Activated CD4-positive, alpha-beta memory T cell treated with anti-CD3 and anti-CD28 coated beads for 36 hours (primary cell): ENCODE measurements at regions of chr17 and their contacts with region 1.

Region 1: GRCh38 chr17:76397687-76398487 is 13.5 kb downstream of the SPHK1 start:
- DNase-seq: peak; percentile 90
- H3K4me3 Mint-ChIP-seq: no peak overlapping the region
- H3K27ac Mint-ChIP-seq: no peak overlapping the region
- H3K4me1 Mint-ChIP-seq: no peaks in the 10 kb centered on the region
- H3K27me3 Mint-ChIP-seq: no peaks in the 10 kb centered on the region

Region 2: GRCh38 chr17:76307299-76307965 is 90.5 kb before region 1 on chr17:
- CTCF ChIA-PET with region 1: interaction called, 152 read pairs
- POLR2A ChIA-PET with region 1: no interaction called
- intact Hi-C with region 1: loop called (anchors 1 kb)
- DNase-seq: no peak
- H3K4me3 Mint-ChIP-seq: no peak overlapping the region
- H3K27ac Mint-ChIP-seq: no peak overlapping the region
- H3K4me1 Mint-ChIP-seq: no peaks in the 10 kb centered on the region
- H3K27me3 Mint-ChIP-seq: no peaks in the 10 kb centered on the region

Region 3: DNA sequence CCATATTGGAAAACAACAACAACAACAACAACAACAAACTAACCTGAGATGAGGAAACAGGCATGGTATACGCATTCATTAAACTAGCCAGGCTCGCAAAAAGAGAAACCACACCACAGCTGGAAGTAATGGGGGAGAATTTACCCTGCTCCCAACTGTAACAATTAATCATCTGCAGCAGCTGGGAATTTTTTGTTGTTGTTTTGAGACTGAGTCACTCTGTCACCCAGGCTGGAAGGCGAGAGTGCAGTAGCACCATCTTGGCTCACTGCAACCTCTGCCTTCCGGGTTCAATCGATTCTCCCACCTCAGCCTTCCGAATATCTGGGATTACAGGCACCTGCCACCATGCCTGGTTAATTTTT is 60.5 kb before region 1 on chr17:
- CTCF ChIA-PET with region 1: interaction called, 14 read pairs
- POLR2A ChIA-PET with region 1: no interaction called
- intact Hi-C with region 1: no loop called
- DNase-seq: no peak
- H3K4me3 Mint-ChIP-seq: no peak overlapping the region
- H3K27ac Mint-ChIP-seq: no peak overlapping the region
- H3K4me1 Mint-ChIP-seq: peaks cover 3% of the 10 kb centered on the region
- H3K27me3 Mint-ChIP-seq: no peaks in the 10 kb centered on the region

Region 4: DNA sequence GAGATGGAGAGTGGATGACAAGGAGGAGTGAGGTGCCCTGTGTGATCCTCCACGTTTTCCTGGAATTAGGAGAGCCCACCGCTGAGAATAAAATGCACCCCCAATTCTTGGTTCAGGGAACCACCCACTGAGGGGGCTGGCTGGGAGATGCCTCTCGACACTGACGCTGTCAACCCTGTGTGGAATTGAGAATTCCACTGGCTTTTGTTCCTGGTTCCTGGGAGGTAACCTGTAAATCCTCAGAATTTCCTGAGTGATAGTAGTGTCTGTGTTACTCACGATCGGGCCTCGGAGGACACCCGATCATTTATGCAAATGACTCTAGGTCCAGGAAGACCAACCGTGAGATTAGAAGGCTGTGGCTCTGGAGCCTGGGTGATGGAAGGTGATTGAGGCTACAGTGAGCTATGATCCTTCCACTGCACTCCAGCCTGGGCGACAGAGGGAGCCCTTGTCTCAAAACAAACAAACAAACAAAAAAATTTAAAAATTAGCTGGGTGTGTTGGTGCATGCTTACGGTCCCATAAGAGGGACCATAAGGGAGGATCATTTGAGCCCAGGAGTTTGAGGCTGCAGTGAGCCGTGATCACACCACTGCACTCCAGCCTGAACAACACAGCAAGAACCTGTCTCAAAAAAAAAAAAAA is 32.5 kb before region 1 on chr17:
- CTCF ChIA-PET with region 1: interaction called, 18 read pairs
- POLR2A ChIA-PET with region 1: no interaction called
- intact Hi-C with region 1: no loop called
- DNase-seq: no peak
- H3K4me3 Mint-ChIP-seq: no peak overlapping the region
- H3K27ac Mint-ChIP-seq: no peak overlapping the region
- H3K4me1 Mint-ChIP-seq: no peaks in the 10 kb centered on the region
- H3K27me3 Mint-ChIP-seq: no peaks in the 10 kb centered on the region

Region 5: DNA sequence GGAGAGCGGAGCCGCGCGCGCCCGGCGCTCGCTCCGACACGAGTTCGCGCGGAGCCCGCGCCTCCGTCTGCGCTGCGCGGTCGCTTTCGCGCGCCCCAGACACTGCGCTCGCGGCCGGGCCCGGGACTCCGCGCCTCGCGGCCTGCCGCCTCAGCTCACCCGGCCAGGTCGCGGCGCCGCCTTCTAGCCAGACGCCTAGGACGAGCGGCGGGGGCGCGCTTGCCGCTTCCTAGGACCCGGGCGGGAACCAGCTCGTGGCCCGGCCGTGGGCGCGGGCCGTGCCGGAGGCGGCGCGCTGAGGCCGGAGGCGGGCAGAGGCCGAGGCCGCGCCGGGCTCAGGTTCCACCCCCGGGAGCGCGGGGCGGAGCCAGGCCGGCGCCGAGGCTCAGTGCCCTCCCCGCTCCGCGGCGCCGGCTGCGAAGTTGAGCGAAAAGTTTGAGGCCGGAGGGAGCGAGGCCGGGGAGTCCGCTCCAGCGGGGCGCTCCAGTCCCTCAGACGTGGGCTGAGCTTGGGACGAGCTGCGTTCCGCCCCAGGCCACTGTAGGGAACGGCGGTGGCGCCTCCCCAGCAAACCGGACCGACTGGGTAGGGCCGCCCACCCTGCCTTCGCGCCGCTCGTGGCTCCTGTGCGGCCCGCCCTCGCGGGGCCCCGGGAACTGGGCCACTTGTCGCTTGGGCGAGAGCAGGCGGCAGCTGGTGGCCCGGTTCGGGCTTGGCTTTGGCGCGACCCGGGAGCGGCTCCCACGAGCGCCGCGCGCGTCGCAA is 13.5 kb before region 1 on chr17 and contains the start of gene SPHK1:
- CTCF ChIA-PET with region 1: interaction called, 109 read pairs
- POLR2A ChIA-PET with region 1: interaction called, 3 read pairs
- intact Hi-C with region 1: no loop called
- DNase-seq: peak; percentile 77
- H3K4me3 Mint-ChIP-seq: peak within 1 kb of the TSS; percentile 78
- H3K27ac Mint-ChIP-seq: peak within 1 kb of the TSS; percentile 85
- H3K4me1 Mint-ChIP-seq: peaks cover 8% of the 10 kb centered on the region
- H3K27me3 Mint-ChIP-seq: no peaks in the 10 kb centered on the region
- total RNA-seq, gene SPHK1: 9.9 to 11.4 TPM

Region 6: DNA sequence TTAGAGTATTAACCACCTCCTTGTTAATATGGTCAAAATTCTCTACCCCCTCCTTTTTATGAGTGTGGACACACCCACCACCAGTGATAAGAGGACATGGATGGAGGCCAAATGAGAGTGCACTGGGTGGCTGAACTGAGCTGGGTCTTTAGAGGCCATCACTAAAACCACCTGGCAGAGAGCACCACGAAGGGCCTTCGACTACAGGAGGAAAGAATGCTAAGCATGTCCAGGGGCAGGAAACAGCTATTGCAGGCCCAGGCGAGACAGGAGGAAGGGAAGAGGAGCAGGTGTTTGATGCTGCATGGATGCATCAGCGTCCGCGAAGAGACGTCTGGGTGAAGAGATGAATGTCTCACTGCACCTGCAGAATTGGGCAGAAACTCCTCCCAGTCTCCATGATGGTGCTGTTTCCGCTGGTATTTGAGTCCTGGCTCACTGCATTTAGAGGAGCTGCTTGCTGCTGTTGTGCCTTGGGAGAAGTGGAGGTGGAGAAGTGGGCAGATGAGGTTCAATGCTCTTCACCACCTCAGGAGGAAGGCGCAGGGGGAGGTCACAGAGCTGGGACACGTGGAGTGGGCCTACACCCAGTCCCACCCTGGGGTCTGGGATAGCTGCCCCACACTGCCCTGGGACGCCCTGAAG is 19.7 kb after region 1 on chr17:
- CTCF ChIA-PET with region 1: interaction called, 20 read pairs
- POLR2A ChIA-PET with region 1: no interaction called
- intact Hi-C with region 1: no loop called
- DNase-seq: no peak
- H3K4me3 Mint-ChIP-seq: no peak overlapping the region
- H3K27ac Mint-ChIP-seq: no peak overlapping the region
- H3K4me1 Mint-ChIP-seq: peaks cover 19% of the 10 kb centered on the region
- H3K27me3 Mint-ChIP-seq: no peaks in the 10 kb centered on the region

Region 7: GRCh38 chr17:76452660-76453430 is 55.0 kb after region 1 on chr17 and contains the start of gene UBE2O:
- CTCF ChIA-PET with region 1: interaction called, 16 read pairs
- POLR2A ChIA-PET with region 1: no interaction called
- intact Hi-C with region 1: no loop called
- DNase-seq: peak; percentile 94
- H3K4me3 Mint-ChIP-seq: peak within 1 kb of the TSS; percentile 83
- H3K27ac Mint-ChIP-seq: no peak within 1 kb of the TSS
- H3K4me1 Mint-ChIP-seq: peaks cover 33% of the 10 kb centered on the region
- H3K27me3 Mint-ChIP-seq: no peaks in the 10 kb centered on the region
- total RNA-seq, gene UBE2O: 24.5 to 25.2 TPM

Region 8: DNA sequence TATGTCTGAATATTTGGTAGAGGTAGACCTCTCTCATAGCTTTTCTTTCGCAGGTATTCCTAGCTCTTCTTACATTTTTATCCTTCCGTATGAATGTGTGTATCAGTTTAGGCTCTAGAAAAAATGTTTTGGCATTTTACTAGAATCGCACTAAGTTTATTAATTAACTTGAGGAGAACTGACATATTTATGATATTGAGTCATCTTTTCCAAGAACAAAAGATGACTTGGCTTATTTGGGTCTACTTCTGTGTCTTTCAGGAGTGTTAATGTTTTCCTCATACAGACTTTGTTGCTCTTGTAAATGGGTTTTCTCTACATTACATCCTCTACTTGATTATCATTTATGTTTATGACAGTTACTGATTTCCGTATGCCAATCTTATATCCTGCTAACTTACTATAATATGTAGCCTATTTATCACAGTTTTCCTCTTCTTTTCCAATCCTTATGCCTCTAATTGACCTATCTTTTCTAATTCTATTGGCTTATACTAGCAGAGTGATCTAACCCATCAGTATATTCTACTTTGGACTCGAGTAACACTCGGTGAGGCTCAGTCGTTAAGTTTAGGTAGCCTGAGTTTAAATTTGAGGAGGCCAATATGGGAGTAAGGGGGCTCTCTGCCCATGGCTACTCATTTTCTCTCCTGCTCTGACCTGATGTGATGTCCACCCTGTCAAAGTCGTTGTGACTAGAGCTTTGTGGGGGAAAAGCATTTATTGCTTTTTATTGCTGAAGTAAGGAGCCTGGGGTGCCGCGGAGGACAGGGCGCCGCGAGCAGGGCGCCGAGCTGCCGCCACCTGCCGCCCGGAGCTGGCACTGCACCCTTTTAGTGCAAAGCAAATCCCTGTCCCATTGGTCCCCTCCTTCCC is 225.6 kb after region 1 on chr17:
- CTCF ChIA-PET with region 1: no interaction called
- POLR2A ChIA-PET with region 1: no interaction called
- intact Hi-C with region 1: no loop called
- DNase-seq: peak; percentile 85
- H3K4me3 Mint-ChIP-seq: no peak overlapping the region
- H3K27ac Mint-ChIP-seq: no peak overlapping the region
- H3K4me1 Mint-ChIP-seq: peaks cover 5% of the 10 kb centered on the region
- H3K27me3 Mint-ChIP-seq: no peaks in the 10 kb centered on the region